Calu3 (cell line): ENCODE measurements at regions of chr17 and their contacts with region 1.

Region 1: GRCh38 chr17:37609170-37610040 is at the start of gene SYNRG:
- DNase-seq: peak; percentile 100
- H3K4me3 Mint-ChIP-seq: peak within 1 kb of the TSS; percentile 97
- H3K27ac Mint-ChIP-seq: peak within 1 kb of the TSS; percentile 94
- H3K4me1 Mint-ChIP-seq: peaks cover 34% of the 10 kb centered on the region
- H3K27me3 Mint-ChIP-seq: no peaks in the 10 kb centered on the region
- CTCF ChIP-seq: peak; percentile 52
- total RNA-seq, gene SYNRG: 127 and 130 TPM in 2 replicates

Region 2: DNA sequence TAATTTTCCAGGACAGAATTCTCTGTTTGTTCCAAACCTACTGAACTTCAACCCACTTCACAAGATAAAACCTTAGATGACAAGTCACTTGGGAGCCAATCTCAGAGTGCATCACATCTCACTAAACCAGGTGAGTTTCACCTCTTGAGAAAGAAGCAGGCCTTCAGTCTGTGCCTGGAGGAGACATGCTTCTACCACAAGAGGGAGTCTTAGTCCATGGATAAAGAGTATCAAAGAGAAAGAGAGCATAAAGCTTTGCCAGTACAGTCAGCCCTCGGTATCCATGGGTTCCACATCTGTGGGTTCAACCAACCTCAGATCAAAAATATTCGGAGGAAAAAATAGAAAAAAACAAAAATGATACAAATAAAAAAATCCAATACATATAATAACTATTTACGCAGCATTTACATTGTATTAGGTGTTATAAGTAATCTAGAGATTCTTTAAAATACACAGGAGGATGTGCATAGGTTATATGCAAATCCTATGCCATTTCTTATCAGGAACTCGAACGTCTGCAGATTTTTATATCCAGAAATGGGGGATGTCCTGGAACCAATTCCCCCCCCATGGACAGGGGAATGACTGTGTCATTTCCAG is 82.1 kb before region 1 on chr17:
- CTCF ChIA-PET with region 1: interaction called, 8 read pairs
- intact Hi-C with region 1: loop called (anchors 5 kb)
- DNase-seq: peak; percentile 74
- H3K4me3 Mint-ChIP-seq: no peak overlapping the region
- H3K27ac Mint-ChIP-seq: no peak overlapping the region
- H3K4me1 Mint-ChIP-seq: no peaks in the 10 kb centered on the region
- H3K27me3 Mint-ChIP-seq: no peaks in the 10 kb centered on the region
- CTCF ChIP-seq: peak; percentile 94

Region 3: GRCh38 chr17:37598145-37598544 is 11.3 kb before region 1 on chr17:
- CTCF ChIA-PET with region 1: interaction called, 13 read pairs
- intact Hi-C with region 1: no loop called
- DNase-seq: no peak
- H3K4me3 Mint-ChIP-seq: no peak overlapping the region
- H3K27ac Mint-ChIP-seq: no peak overlapping the region
- H3K4me1 Mint-ChIP-seq: no peaks in the 10 kb centered on the region
- H3K27me3 Mint-ChIP-seq: no peaks in the 10 kb centered on the region
- CTCF ChIP-seq: no peak

Region 4: DNA sequence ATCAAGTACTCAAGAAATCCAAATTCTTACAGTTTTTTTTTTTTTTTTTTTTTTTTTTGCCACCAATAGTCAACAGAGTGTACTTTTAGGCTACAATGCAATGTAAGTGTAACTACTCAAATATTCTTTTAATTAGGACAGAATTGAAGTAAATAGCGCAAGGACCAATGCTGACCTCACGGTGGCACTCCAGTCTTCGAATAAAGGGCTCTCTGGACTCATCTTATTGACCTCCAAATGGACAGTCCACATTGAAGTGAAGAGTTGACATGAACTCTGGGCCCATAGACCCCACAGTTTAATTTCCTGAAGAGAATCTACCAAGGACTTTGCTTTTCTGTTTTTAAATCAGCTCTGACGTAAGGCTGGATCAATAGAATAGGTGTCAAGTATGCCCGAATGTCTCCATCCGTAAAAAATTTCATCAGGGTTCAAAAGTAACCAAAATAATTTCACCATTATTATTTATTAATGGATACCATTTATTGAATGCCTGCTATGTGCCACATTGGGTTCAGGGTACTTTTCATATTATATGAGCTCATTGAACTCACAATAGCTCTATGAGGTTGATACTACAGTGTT is 41.1 kb after region 1 on chr17:
- CTCF ChIA-PET with region 1: no interaction called
- intact Hi-C with region 1: no loop called
- DNase-seq: peak; percentile 80
- H3K4me3 Mint-ChIP-seq: no peak overlapping the region
- H3K27ac Mint-ChIP-seq: no peak overlapping the region
- H3K4me1 Mint-ChIP-seq: peaks cover 17% of the 10 kb centered on the region
- H3K27me3 Mint-ChIP-seq: peaks cover 2% of the 10 kb centered on the region
- CTCF ChIP-seq: peak; percentile 85

Region 5: GRCh38 chr17:37671824-37672547 is 62.6 kb after region 1 on chr17:
- CTCF ChIA-PET with region 1: no interaction called
- intact Hi-C with region 1: no loop called
- DNase-seq: no peak
- H3K4me3 Mint-ChIP-seq: no peak overlapping the region
- H3K27ac Mint-ChIP-seq: no peak overlapping the region
- H3K4me1 Mint-ChIP-seq: no peaks in the 10 kb centered on the region
- H3K27me3 Mint-ChIP-seq: peaks cover 3% of the 10 kb centered on the region
- CTCF ChIP-seq: no peak